Activated B cell treated with CpG ODN at 0.5 μM for 24 hours (primary cell): ENCODE measurements at regions of chr1 and their contacts with region 1.

Region 1: GRCh38 chr1:174999216-174999925 is 376 bp upstream of the CACYBP start:
- DNase-seq: peak; percentile 88
- ATAC-seq: peak; percentile 78
- H3K4me3 Mint-ChIP-seq: no peak overlapping the region
- H3K27ac Mint-ChIP-seq: no peak overlapping the region
- H3K4me1 Mint-ChIP-seq: peaks cover 38% of the 10 kb centered on the region
- H3K27me3 Mint-ChIP-seq: no peaks in the 10 kb centered on the region
- CTCF ChIP-seq: no peak

Region 2: DNA sequence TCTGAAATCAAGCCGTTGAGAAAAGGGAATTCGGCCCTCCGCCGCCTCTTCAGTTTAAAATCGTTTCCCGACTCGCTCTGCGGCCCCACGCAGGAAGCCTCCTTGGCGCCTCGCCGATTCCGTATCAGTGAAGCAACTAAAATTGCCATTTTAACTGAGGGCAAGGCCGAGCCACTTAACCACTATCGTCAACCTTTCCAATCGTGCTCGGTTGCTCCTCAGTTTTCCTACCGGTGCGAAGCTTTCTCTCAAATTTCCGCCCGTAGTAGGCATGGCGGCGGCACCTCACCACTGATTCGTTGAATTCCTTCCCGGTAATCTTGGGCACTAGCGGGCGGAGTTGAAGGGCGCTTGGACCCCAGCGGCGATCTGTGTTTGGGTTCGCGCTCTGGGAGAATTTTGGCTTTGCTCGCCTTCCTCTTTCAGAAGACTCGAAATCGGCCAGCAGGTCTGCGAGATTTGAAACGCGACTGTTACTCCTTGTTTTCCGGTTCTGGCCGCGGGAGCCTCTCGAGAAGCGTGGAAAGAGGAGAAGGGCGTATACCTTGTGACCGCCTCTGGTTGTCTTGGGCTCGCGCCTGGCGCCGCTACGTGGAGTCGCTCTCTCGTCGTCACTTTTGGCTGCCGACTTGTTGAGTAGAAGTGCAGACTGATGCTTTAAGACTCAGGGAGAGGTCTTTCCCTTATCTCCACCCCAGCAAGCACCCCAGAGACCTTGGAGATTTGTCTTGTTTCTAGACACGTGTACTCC is 1174.9 kb before region 1 on chr1 and contains the starts of genes CENPL and DARS2:
- CTCF ChIA-PET with region 1: no interaction called
- POLR2A ChIA-PET with region 1: interaction called, 4 read pairs
- intact Hi-C with region 1: loop called (anchors 1 kb)
- DNase-seq: peak; percentile 80
- ATAC-seq: peak; percentile 89
- H3K4me3 Mint-ChIP-seq: peak within 1 kb of the TSS; percentile 95
- H3K27ac Mint-ChIP-seq: peak within 1 kb of the TSS; percentile 97
- H3K4me1 Mint-ChIP-seq: peaks cover 28% of the 10 kb centered on the region
- H3K27me3 Mint-ChIP-seq: no peaks in the 10 kb centered on the region
- CTCF ChIP-seq: no peak
- total RNA-seq, gene CENPL: 12.7 and 14.0 TPM in 2 replicates
- total RNA-seq, gene DARS2: 24.0 and 26.0 TPM in 2 replicates

Region 3: GRCh38 chr1:174159252-174160108 is 839.9 kb before region 1 on chr1 and contains the start of gene RABGAP1L:
- CTCF ChIA-PET with region 1: no interaction called
- POLR2A ChIA-PET with region 1: interaction called, 5 read pairs
- intact Hi-C with region 1: loop called (anchors 1 kb)
- DNase-seq: peak; percentile 88
- ATAC-seq: peak; percentile 84
- H3K4me3 Mint-ChIP-seq: peak within 1 kb of the TSS; percentile 96
- H3K27ac Mint-ChIP-seq: peak within 1 kb of the TSS; percentile 99
- H3K4me1 Mint-ChIP-seq: peaks cover 72% of the 10 kb centered on the region
- H3K27me3 Mint-ChIP-seq: no peaks in the 10 kb centered on the region
- CTCF ChIP-seq: no peak
- total RNA-seq, gene RABGAP1L: 103 and 126 TPM in 2 replicates

Region 4: DNA sequence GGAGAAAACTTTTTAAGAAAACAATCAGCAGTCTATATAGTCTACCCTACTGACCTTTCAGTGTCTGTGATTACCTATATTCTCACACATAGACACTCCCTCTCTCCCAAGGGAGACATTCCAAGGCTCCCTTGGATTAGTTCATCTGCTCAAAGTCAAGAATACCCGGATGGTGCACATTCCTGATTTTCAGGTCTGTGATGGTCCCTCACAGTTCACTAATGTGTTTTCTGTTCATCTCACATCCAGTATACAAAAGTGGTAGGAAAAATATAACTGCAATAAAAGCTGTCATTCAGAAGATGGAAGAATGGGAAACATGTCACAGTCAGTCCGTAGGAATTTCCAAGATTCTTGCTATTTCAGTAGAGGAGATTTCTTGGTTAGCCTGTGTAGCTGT is 223.8 kb before region 1 on chr1:
- CTCF ChIA-PET with region 1: interaction called, 12 read pairs
- POLR2A ChIA-PET with region 1: interaction called, 13 read pairs
- intact Hi-C with region 1: loop called (anchors 1 kb)
- DNase-seq: no peak
- ATAC-seq: no peak
- H3K4me3 Mint-ChIP-seq: no peak overlapping the region
- H3K27ac Mint-ChIP-seq: no peak overlapping the region
- H3K4me1 Mint-ChIP-seq: peaks cover 22% of the 10 kb centered on the region
- H3K27me3 Mint-ChIP-seq: no peaks in the 10 kb centered on the region
- CTCF ChIP-seq: no peak

Region 5: GRCh38 chr1:174874331-174875053 is 124.9 kb before region 1 on chr1:
- CTCF ChIA-PET with region 1: interaction called, 3 read pairs
- POLR2A ChIA-PET with region 1: interaction called, 6 read pairs
- intact Hi-C with region 1: loop called (anchors 5 kb)
- DNase-seq: no peak
- ATAC-seq: peak; percentile 42
- H3K4me3 Mint-ChIP-seq: peak overlapping the region; percentile 83
- H3K27ac Mint-ChIP-seq: peak overlapping the region; percentile 72
- H3K4me1 Mint-ChIP-seq: peaks cover 59% of the 10 kb centered on the region
- H3K27me3 Mint-ChIP-seq: no peaks in the 10 kb centered on the region
- CTCF ChIP-seq: no peak

Region 6: DNA sequence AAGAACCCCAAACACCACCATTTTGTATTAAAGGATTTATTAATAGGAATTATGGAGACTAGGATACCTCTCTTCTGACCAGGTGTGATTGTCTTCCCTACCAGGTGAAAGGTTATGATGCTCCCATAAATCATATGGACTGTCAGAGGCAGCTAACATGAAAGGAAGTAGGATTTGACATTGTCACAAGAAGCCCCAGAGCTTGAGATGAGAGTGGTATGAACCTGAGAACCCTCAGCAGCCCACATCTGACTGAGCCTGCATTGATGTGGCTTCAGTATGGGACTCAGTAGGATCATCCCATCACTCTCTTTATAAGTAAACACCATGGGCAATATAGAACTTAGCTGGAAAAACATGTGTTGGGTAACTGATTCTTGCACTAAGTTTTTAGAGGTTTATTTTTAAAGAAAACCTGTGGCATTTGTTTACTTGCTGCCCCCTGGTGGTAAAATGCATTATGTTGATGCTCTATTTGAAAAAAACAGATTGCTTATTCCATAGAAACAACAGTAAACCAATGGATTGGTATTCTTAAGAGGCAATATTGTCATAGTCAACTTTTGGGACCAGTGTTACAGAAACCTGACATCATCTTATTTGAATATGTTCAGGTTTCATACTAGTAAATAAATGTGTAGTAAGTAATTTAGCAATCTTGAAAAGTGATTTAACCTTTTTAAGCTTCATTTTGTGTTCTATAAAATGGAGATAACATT is 16.2 kb before region 1 on chr1:
- CTCF ChIA-PET with region 1: interaction called, 6 read pairs
- POLR2A ChIA-PET with region 1: interaction called, 15 read pairs
- intact Hi-C with region 1: no loop called
- DNase-seq: no peak
- ATAC-seq: no peak
- H3K4me3 Mint-ChIP-seq: no peak overlapping the region
- H3K27ac Mint-ChIP-seq: no peak overlapping the region
- H3K4me1 Mint-ChIP-seq: peaks cover 10% of the 10 kb centered on the region
- H3K27me3 Mint-ChIP-seq: no peaks in the 10 kb centered on the region
- CTCF ChIP-seq: peak; percentile 48

Region 7: GRCh38 chr1:175078629-175079028 is 79.3 kb after region 1 on chr1:
- CTCF ChIA-PET with region 1: no interaction called
- POLR2A ChIA-PET with region 1: no interaction called
- intact Hi-C with region 1: no loop called
- DNase-seq: no peak
- ATAC-seq: no peak
- H3K4me3 Mint-ChIP-seq: no peak overlapping the region
- H3K27ac Mint-ChIP-seq: no peak overlapping the region
- H3K4me1 Mint-ChIP-seq: no peaks in the 10 kb centered on the region
- H3K27me3 Mint-ChIP-seq: peaks cover 17% of the 10 kb centered on the region
- CTCF ChIP-seq: no peak

Region 8: DNA sequence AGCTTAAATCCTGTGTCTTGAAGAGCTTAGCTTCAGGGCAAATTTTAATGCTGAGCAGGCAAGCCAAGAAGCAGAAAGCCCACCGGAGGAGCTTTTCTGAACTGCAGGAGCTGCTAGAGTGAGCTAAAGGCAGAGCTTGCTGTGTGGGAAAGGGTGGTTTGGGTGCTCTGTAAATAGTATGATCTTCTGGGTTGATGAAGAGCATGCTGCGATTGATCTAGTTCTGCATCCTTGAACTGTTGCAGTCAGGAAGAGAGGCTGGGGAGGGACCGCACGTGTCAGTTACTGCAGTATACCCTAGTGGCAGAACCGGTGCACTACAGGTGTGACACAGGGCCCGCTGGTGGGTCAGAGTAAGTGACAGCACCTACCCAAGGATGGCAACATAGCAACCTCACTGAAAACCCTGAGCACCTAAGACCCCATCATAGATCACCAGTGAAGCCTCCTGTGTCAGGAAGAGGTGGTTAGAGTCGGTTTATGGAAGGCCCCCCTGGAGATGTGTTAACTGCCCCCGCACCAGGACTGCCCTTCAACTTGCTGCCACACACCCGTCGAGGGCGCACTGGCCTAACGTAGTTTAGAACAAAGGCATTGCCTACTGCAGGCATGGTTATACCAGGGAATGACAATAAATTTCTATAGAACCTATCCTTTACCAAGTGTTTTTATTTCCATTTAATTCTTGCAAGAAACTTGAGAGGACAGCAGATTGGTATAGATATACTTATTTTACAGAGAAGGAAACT is 339.2 kb after region 1 on chr1:
- CTCF ChIA-PET with region 1: no interaction called
- POLR2A ChIA-PET with region 1: no interaction called
- intact Hi-C with region 1: no loop called
- DNase-seq: peak; percentile 37
- ATAC-seq: peak; percentile 89
- H3K4me3 Mint-ChIP-seq: no peak overlapping the region
- H3K27ac Mint-ChIP-seq: no peak overlapping the region
- H3K4me1 Mint-ChIP-seq: no peaks in the 10 kb centered on the region
- H3K27me3 Mint-ChIP-seq: peaks cover 8% of the 10 kb centered on the region
- CTCF ChIP-seq: no peak

Region 9: GRCh38 chr1:175750366-175751071 is 751.1 kb after region 1 on chr1:
- CTCF ChIA-PET with region 1: no interaction called
- POLR2A ChIA-PET with region 1: no interaction called
- intact Hi-C with region 1: no loop called
- DNase-seq: no peak
- ATAC-seq: no peak
- H3K4me3 Mint-ChIP-seq: no peak overlapping the region
- H3K27ac Mint-ChIP-seq: no peak overlapping the region
- H3K4me1 Mint-ChIP-seq: no peaks in the 10 kb centered on the region
- H3K27me3 Mint-ChIP-seq: peaks cover 20% of the 10 kb centered on the region
- CTCF ChIP-seq: no peak